Activated CD4-positive, alpha-beta T cell treated with anti-CD3 and anti-CD28 coated beads, Interleukin-2, amount 10 ng/mL, durations not matched to agents 7 days and 5 days (primary cell): ENCODE measurements at regions of chr7 and their contacts with region 1.

Region 1: GRCh38 chr7:74269757-74270277 is 15.6 kb upstream of the RFC2 start:
- DNase-seq: peak; percentile 69
- H3K4me3 Mint-ChIP-seq: peak overlapping the region; percentile 79
- H3K27ac Mint-ChIP-seq: no peak overlapping the region
- H3K4me1 Mint-ChIP-seq: peaks cover 22% of the 10 kb centered on the region
- H3K27me3 Mint-ChIP-seq: peaks cover 15% of the 10 kb centered on the region

Region 2: DNA sequence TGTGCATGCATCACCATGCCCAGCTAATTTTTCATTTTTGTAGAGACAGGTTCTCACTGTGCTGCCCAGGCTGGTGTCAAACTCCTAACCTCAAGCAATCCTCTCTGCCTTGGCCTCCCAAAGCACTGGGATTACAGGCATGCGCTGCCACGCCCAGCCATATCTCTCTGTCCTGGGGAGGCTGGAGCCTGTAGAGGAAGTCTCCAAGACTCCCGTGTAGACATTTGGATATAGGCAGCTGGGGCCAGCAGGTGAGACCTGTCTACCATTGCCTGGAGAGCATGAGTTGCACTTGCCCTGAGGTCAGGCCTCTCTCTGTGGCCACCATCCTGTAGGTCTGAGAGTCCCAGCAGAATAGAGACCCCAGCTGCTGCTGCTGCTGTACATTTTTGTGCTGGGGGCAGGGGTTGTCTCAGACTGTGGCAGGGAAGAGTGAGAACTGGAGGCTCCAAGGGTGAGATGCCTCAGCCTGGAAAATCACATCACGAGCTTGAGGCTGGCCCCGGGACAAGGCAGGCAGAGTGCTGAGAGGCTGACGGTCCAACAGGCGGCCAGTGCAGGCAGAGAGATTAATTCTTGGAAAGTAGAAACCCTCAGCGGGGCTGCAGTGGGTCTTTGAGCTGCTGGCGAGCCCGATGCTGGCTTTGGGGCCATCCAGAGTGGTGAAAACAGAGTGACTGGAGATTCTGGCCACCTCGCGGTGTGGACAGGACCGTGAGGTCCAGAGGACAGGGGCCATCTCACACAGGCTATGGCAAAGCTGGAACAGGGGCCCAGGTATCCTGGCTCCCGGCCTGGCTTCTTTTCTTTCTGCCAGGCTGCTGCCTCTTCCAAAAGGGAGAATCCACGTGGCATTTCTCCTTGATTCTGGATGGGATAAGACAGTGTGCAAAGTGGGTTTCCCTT is 347.9 kb before region 1 on chr7:
- CTCF ChIA-PET with region 1: no interaction called
- POLR2A ChIA-PET with region 1: interaction called, 14 read pairs
- DNase-seq: no peak
- H3K4me3 Mint-ChIP-seq: no peak overlapping the region
- H3K27ac Mint-ChIP-seq: no peak overlapping the region
- H3K4me1 Mint-ChIP-seq: no peaks in the 10 kb centered on the region
- H3K27me3 Mint-ChIP-seq: peaks cover 10% of the 10 kb centered on the region

Region 3: DNA sequence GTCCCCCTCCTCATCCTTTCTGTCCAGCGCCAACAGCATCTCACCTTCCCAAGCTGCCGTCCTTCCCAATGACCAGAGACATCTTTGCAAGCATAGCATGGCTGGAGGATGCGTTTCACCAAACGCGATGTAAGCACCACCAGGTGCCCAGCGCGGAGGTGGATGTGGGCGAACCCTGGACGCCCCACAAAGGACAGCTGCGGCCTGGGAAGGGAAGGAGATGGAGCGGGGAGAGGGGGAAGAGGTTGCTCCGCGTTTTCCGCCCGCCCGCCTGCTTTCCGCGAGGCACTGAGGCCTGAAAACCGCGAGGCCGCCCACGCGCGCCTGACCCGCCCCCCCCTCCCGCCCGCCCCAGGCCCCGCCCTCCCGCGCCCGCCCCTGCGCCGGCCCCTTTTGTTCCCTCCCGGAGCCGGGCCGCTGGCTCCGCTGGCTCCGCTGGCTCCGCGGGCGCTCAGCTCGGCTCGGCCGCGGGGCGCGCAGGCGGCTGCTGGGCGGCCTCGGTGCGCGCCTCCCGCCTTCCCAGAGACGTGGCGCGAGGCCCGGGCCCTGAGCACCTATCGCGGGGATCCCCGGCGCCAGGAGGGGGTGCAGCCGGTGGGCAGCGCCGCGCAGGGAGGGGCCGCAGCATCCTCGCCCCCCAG is 19.3 kb after region 1 on chr7 and contains the start of gene CLIP2:
- CTCF ChIA-PET with region 1: interaction called, 12 read pairs
- POLR2A ChIA-PET with region 1: no interaction called
- DNase-seq: peak; percentile 71
- H3K4me3 Mint-ChIP-seq: peak within 1 kb of the TSS; percentile 61
- H3K27ac Mint-ChIP-seq: peak within 1 kb of the TSS; percentile 37
- H3K4me1 Mint-ChIP-seq: peaks cover 20% of the 10 kb centered on the region
- H3K27me3 Mint-ChIP-seq: peaks cover 31% of the 10 kb centered on the region
- total RNA-seq, gene CLIP2: 0.72 to 0.89 TPM